Activated CD4-positive, alpha-beta memory T cell treated with anti-CD3 and anti-CD28 coated beads for 36 hours (primary cell): ENCODE measurements at regions of chr15 and their contacts with region 1.

Region 1: DNA sequence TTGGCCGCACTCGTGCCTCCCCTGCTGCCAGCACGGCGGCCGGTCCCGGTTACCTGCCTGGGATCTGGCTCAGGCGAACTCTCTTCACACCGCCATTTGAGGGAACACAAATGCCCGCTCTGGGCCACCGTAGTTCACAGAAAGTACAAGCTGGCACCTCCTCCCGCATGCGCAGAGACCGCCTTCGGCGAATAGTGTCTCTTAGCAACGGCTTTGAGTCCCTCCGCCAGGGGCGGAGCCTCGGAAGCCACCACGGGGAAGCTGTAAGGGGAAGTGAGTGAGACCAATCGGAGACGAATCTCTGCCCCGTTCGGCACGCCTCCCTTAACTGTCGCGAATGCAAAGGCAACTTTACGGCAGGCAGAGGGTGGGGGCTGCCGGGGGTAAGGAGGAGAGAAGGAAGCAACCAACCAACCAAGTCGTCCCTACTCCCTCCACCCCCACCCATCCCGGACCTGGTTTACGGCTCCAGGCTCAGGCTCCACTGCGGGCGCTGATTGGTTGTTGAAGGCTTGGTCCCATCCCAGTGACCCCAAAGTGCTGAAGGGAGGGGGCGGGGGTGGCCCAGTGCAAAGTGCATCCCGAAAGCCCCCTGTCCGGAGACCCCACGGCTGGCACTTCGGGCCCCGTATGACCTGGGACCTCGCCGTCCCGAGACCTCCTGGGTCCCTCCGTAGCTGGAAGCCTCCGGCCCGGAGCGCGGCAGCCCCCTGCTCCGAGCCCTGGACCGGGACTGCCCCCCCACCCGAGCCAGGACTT is at the starts of genes ASB7 and LINS1:
- DNase-seq: peak; percentile 100
- H3K4me3 Mint-ChIP-seq: no peak within 1 kb of the TSS
- H3K27ac Mint-ChIP-seq: no peak within 1 kb of the TSS
- H3K4me1 Mint-ChIP-seq: peaks cover 63% of the 10 kb centered on the region
- H3K27me3 Mint-ChIP-seq: no peaks in the 10 kb centered on the region
- total RNA-seq, gene ASB7: 19.6 to 21.3 TPM
- total RNA-seq, gene LINS1: 31.6 to 37.0 TPM

Region 2: GRCh38 chr15:98647774-98648653 is 1954.2 kb before region 1 on chr15 and contains the start of gene IGF1R:
- CTCF ChIA-PET with region 1: no interaction called
- POLR2A ChIA-PET with region 1: no interaction called
- intact Hi-C with region 1: loop called (anchors 5 kb)
- DNase-seq: peak; percentile 86
- H3K4me3 Mint-ChIP-seq: peak within 1 kb of the TSS; percentile 77
- H3K27ac Mint-ChIP-seq: peak within 1 kb of the TSS; percentile 81
- H3K4me1 Mint-ChIP-seq: peaks cover 22% of the 10 kb centered on the region
- H3K27me3 Mint-ChIP-seq: peaks cover 33% of the 10 kb centered on the region
- total RNA-seq, gene IGF1R: 13.2 to 14.8 TPM

Region 3: GRCh38 chr15:99928429-99928981 is 673.7 kb before region 1 on chr15:
- CTCF ChIA-PET with region 1: no interaction called
- POLR2A ChIA-PET with region 1: interaction called, 3 read pairs
- intact Hi-C with region 1: loop called (anchors 2 kb)
- DNase-seq: peak; percentile 87
- H3K4me3 Mint-ChIP-seq: peak overlapping the region; percentile 77
- H3K27ac Mint-ChIP-seq: peak overlapping the region; percentile 42
- H3K4me1 Mint-ChIP-seq: peaks cover 8% of the 10 kb centered on the region
- H3K27me3 Mint-ChIP-seq: no peaks in the 10 kb centered on the region

Region 4: DNA sequence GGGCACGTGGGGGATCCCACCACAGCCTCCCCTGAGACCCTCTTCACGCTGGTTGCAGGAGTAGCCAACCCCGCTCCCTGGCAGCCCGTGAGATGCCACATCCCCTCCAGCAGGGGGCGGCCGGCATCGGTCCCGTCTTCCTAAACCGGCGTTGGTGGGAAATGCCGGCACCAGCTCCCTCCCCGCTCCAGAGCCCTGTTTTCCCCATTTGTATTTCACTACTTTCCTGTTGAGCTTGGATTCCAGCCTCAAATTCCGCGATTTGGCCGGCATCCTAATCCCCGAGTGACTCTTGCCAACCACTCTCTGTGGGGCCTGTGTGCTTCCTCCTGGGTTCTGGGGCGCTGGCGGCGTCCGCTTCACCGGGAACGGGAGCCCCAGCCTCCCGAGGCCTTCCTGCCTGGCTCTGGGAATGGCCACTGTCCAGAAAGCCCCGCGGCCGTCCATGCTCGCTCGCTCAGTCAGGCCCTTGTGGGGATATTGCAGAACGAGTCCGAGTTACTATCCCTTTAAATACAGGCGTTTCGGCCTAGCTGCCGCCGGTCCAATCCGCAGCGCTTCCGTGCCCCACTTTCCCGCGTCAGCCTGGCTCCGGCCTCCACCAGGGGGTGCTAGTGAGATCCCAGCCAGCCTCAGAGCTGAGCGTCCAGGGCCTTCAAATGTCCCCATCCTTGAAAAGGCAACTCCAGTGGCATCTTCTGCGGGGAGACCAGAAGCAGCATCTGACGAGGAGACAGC is 252.4 kb before region 1 on chr15:
- CTCF ChIA-PET with region 1: interaction called, 38 read pairs
- POLR2A ChIA-PET with region 1: interaction called, 4 read pairs
- intact Hi-C with region 1: loop called (anchors 1 kb)
- DNase-seq: peak; percentile 94
- H3K4me3 Mint-ChIP-seq: peak overlapping the region; percentile 80
- H3K27ac Mint-ChIP-seq: peak overlapping the region; percentile 69
- H3K4me1 Mint-ChIP-seq: peaks cover 6% of the 10 kb centered on the region
- H3K27me3 Mint-ChIP-seq: peaks cover 7% of the 10 kb centered on the region

Region 5: DNA sequence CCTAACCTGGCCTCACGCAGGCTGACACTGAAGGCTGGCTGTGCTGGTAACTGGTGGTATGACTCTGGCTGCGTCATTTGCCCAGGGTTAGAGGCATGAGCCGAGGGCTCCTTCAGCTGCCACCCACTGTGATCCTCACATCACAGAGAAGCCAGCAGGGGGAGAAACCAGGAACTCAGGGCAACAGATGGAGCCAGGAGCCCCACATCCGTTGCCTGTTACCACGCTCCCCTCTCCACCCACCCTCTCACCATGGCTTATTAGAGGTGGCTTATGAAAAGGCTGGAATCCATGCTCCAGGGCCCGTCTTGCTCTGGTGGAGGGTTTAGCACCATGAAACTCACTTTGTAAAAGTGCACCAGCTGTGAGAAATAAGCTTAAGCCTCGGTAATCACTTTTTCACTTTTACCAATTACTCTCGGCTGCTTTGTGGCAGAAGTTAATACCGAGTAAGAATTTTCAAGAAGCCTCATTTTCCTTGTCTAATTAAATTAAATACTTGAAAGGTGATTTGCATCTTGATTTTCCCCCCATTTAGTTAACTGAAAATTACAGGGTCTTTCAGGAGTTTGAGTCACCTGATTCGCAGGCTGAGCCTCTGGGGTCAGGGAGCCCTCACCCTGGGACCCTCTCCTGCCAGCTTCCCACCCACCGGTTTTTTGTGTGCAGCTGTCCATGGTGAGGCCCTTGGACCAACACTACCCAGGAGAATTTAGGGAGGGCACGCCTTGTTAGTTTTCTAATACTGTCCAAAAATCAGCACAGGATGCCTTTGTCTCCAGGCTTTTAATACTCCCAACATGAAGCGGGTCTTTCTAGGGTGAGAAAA is 61.1 kb after region 1 on chr15:
- CTCF ChIA-PET with region 1: no interaction called
- POLR2A ChIA-PET with region 1: no interaction called
- intact Hi-C with region 1: no loop called
- DNase-seq: no peak
- H3K4me3 Mint-ChIP-seq: no peak overlapping the region
- H3K27ac Mint-ChIP-seq: no peak overlapping the region
- H3K4me1 Mint-ChIP-seq: no peaks in the 10 kb centered on the region
- H3K27me3 Mint-ChIP-seq: no peaks in the 10 kb centered on the region

Region 6: GRCh38 chr15:101242160-101242998 is 640.1 kb after region 1 on chr15:
- CTCF ChIA-PET with region 1: no interaction called
- POLR2A ChIA-PET with region 1: no interaction called
- intact Hi-C with region 1: loop called (anchors 2 kb)
- DNase-seq: peak; percentile 68
- H3K4me3 Mint-ChIP-seq: peak overlapping the region; percentile 50
- H3K27ac Mint-ChIP-seq: peak overlapping the region; percentile 82
- H3K4me1 Mint-ChIP-seq: peaks cover 83% of the 10 kb centered on the region
- H3K27me3 Mint-ChIP-seq: no peaks in the 10 kb centered on the region

Region 7: DNA sequence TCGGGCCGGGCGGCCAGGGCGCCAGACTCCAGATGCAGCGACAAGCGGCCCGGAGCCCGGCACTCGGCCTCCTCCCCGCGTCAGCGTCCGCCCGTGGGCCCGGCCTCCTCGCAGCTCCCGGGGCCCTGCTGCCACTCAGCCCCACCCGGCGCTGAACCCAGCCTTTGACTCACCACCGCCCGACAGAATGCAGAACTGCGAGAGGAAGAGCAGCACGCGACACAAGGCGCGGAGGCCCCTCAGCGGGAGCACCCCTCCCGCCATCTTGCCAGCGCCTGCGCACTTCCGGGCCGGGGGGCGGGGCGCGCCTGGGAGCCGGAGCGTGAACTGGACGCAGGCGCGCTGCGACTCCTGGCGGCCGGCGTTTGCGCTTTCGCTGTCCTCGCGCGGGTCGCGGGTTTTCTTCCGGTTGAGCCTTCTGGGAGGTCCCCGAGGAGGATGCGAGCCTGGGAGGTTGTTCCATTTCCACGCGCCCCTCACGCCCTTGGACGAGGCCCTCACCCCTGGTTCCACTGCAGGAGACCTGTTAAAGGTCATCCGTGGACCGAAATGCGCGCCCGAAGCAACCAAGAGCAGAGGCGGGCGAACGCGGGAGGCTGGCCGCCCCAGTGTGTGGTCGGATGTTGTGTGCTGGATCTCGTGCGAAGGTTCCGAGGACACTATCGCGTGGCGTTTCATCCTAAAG is 1050.0 kb after region 1 on chr15 and contains the start of gene TM2D3:
- CTCF ChIA-PET with region 1: no interaction called
- POLR2A ChIA-PET with region 1: interaction called, 3 read pairs
- intact Hi-C with region 1: loop called (anchors 5 kb)
- DNase-seq: peak; percentile 96
- H3K4me3 Mint-ChIP-seq: peak within 1 kb of the TSS; percentile 83
- H3K27ac Mint-ChIP-seq: peak within 1 kb of the TSS; percentile 90
- H3K4me1 Mint-ChIP-seq: peaks cover 38% of the 10 kb centered on the region
- H3K27me3 Mint-ChIP-seq: no peaks in the 10 kb centered on the region
- total RNA-seq, gene TM2D3: 41.7 to 48.1 TPM